ENCODE measurements at regions of chr1 and their contacts with region 1.

Region 1: DNA sequence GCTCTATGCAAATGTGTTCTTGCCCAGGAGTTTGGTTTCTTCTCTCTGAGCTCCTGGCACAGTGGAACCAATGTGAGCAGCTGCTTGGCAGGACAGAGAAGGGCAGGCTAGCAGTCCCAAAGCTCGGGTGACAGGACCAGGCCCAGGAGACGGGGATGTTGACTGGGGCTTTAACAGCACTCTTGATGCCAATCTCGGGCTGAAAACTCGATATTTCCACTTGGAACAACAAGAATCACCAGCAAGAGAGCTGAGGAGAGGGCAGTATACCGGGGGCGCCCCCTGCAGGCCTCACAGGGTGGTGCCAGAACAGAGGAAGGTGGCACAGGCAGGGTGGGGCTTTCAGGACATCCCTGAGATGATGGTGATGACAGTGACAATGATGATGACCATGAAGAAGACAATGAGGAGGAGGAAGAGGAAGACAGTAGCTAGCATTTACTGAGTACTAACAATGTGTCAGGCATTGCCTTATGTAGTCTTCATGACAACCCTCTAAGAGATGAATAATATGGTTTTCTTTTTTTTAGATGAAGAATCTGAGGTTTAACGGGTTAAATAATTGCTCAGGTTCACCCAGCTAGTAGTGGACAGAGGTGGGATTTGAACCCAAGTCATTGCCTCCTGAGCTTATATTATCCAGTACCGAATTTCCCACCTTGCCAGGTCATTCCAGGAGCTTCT is 2.7 kb upstream of the KCNJ9 start:
- DNase-seq: peak; percentile 47 to 65 (median 60)
- H3K4me3 ChIP-seq: no peak overlapping the region
- H3K27ac ChIP-seq: no peak overlapping the region
- H3K4me1 ChIP-seq: peaks cover 0 to 3% (median under 1%) of the 10 kb centered on the region in 4 experiments
- H3K27me3 ChIP-seq: peaks cover 9 to 50% (median 38%) of the 10 kb centered on the region in 5 experiments

Region 2: DNA sequence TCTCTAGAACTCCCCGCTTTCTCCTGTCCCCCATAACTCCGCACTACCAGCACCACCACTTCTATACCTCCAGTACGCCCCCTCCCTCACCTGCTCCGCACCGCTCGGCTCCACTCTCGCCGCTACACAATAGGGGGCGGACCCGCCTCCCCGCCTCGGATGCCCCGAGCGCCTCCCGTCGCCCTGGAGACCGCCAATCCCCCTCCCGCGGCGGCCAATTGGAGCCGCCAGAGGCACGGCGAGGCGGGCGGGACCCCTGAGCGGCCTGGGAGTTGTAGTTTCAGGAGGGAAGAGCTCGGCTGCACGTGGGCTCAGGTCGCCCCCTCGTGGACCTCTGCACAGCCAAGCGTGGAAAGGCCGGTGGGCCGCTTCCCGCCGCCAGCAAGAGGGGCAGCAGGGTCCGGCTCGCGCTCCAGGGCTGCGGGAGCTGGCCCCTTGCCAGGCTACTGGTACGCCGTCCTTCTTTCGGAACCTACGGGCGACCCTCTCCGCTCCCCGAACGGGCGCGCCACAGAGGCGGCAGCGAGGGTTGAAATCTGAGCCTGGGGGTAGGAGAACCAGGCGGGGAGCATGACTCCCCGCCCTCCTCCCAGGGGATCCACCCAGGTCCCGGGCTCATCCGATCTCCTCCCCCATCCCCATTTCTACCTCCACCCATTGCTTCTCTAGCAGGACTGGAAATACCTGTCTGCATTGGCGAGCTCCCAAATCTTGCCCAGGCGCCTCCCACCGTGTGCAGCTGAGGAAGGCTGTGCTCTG is 133.0 kb before region 1 on chr1 and contains the start of gene IGSF9:
- CTCF ChIA-PET with region 1: interaction called, 14 read pairs
- POLR2A ChIA-PET with region 1: no interaction called
- DNase-seq: peak; percentile 89 to 93 (median 92)
- H3K4me3 ChIP-seq: peak within 1 kb of the TSS; percentile 8 to 73 (median 48)
- H3K27ac ChIP-seq: no peak within 1 kb of the TSS
- H3K4me1 ChIP-seq: peaks cover 0 to 27% (median 11%) of the 10 kb centered on the region in 4 experiments
- H3K27me3 ChIP-seq: peaks cover 0 to 25% (median 0%) of the 10 kb centered on the region in 5 experiments

Region 3: GRCh38 chr1:159991513-159991912 is 87.1 kb before region 1 on chr1:
- CTCF ChIA-PET with region 1: no interaction called
- POLR2A ChIA-PET with region 1: no interaction called
- DNase-seq: peak; percentile 69 to 80 (median 73)
- H3K4me3 ChIP-seq: no peak overlapping the region
- H3K27ac ChIP-seq: no peak overlapping the region
- H3K4me1 ChIP-seq: peaks cover 0 to 8% (median 6%) of the 10 kb centered on the region in 4 experiments
- H3K27me3 ChIP-seq: no peaks in the 10 kb centered on the region

Region 4: GRCh38 chr1:160031365-160032164 is 47.1 kb before region 1 on chr1 and contains the start of gene PIGM:
- CTCF ChIA-PET with region 1: interaction called, 13 read pairs
- POLR2A ChIA-PET with region 1: no interaction called
- DNase-seq: peak; percentile 89 to 92 (median 91)
- H3K4me3 ChIP-seq: peak within 1 kb of the TSS; percentile 61 to 95 (median 89)
- H3K27ac ChIP-seq: peak within 1 kb of the TSS in 1 of 2 experiments; percentile 39
- H3K4me1 ChIP-seq: peaks cover 10 to 34% (median 24%) of the 10 kb centered on the region in 4 experiments
- H3K27me3 ChIP-seq: no peaks in the 10 kb centered on the region

Region 5: GRCh38 chr1:160058087-160058486 is 20.6 kb before region 1 on chr1:
- CTCF ChIA-PET with region 1: interaction called, 32 read pairs
- POLR2A ChIA-PET with region 1: no interaction called
- DNase-seq: no peak
- H3K4me3 ChIP-seq: no peak overlapping the region
- H3K27ac ChIP-seq: no peak overlapping the region
- H3K4me1 ChIP-seq: no peaks in the 10 kb centered on the region
- H3K27me3 ChIP-seq: peaks cover 0 to 8% (median 0%) of the 10 kb centered on the region in 5 experiments

Region 6: DNA sequence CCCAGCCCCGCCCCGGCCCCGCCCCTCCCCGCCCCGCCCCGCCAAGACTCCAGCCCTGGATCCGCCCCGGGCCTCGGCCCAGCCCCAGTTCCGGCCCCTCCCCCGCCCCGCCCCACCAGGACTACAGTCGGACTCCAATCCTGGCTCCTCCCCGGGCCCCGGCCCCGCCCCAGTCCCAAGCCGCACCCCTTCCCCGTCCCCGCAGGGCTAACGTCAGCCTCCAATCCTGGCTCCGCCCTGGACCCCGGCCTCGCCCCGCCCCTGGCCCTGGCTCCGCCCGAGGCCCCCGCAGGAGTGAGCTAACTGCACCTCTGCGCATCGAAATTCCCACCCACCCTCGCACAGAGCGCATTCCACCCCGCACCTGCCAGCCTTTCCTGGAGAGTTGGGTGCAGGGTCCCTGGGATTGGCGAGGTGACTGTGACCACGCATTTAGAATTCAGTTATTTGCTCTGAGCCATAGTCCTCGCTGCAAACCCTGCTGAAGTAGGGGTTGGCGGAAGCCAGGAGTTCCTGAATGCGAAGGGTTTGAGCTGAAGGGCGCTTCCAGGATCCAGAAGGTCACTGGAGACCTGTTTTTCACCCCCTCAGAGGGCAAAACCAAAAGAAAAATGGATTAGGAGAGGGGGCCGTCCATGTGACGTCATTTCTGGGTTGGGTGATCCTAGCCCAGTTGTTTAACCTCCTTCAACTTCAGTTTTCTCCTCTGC is 20.4 kb after region 1 on chr1:
- CTCF ChIA-PET with region 1: interaction called, 10 read pairs
- POLR2A ChIA-PET with region 1: no interaction called
- DNase-seq: peak; percentile 92 to 96 (median 95)
- H3K4me3 ChIP-seq: peak overlapping the region; percentile 37 to 89 (median 71)
- H3K27ac ChIP-seq: peak overlapping the region; percentile 41 to 87
- H3K4me1 ChIP-seq: peaks cover 0 to 48% (median 35%) of the 10 kb centered on the region in 4 experiments
- H3K27me3 ChIP-seq: no peaks in the 10 kb centered on the region

Region 7: DNA sequence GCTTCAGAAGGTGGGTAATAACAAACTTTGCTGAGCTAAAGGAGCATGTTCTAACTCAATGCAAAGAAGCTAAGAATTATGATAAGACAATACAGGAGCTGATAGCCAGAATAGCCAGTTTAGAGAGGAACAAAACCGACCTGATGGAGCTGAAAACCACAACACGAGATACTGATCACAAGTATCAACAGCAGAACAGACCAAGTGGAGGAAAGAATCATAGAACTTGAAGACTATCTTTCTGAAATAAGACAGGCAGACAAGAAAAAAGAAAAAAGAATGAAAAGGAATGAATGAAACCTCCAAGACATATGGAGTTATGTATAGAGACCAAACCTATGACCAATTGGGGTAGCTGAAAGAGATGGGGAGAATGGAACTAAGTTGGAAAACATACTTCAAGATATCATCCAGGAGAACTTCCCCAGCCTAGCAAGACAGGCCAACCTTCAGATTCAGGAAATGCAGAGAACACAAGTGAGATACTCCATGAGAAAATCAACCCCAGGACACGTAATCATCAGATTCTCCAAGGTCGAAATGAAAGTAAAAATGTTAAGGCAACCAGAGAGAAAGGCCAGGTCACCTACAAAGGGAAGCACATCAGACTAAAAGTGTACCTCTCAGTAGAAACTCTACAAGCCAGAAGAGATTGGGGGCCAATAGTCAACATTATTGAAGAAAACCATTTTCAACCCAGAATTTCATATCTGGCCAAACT is 480.2 kb after region 1 on chr1:
- CTCF ChIA-PET with region 1: no interaction called
- POLR2A ChIA-PET with region 1: no interaction called
- DNase-seq: no peak
- H3K4me3 ChIP-seq: no peak overlapping the region
- H3K27ac ChIP-seq: no peak overlapping the region
- H3K4me1 ChIP-seq: peaks cover 0 to 3% (median 0%) of the 10 kb centered on the region in 4 experiments
- H3K27me3 ChIP-seq: peaks cover 0 to 5% (median 0%) of the 10 kb centered on the region in 5 experiments

Measured in common myeloid progenitor, CD34-positive (primary cell).